Vagina (tissue), 2 donors: ENCODE measurements at regions of chr17 and their contacts with region 1.

Region 1: GRCh38 chr17:32259586-32259985 is 6.0 kb upstream of the RHBDL3 start:
- DNase-seq: no peak
- H3K4me3 ChIP-seq: no peak overlapping the region
- H3K27ac ChIP-seq: no peak overlapping the region
- H3K4me1 ChIP-seq: peaks cover 7% of the 10 kb centered on the region
- H3K27me3 ChIP-seq: no peaks in the 10 kb centered on the region
- CTCF ChIP-seq: no peak
- POLR2A ChIP-seq: no peak

Region 2: GRCh38 chr17:32323811-32324491 is 64.4 kb after region 1 on chr17:
- intact Hi-C with region 1: loop called (anchors 5 kb)
- DNase-seq: no peak
- H3K4me3 ChIP-seq: peak overlapping the region; percentile 13 to 37
- H3K27ac ChIP-seq: no peak overlapping the region
- H3K4me1 ChIP-seq: peaks cover 9% of the 10 kb centered on the region
- H3K27me3 ChIP-seq: no peaks in the 10 kb centered on the region
- CTCF ChIP-seq: no peak
- POLR2A ChIP-seq: no peak

Region 3: DNA sequence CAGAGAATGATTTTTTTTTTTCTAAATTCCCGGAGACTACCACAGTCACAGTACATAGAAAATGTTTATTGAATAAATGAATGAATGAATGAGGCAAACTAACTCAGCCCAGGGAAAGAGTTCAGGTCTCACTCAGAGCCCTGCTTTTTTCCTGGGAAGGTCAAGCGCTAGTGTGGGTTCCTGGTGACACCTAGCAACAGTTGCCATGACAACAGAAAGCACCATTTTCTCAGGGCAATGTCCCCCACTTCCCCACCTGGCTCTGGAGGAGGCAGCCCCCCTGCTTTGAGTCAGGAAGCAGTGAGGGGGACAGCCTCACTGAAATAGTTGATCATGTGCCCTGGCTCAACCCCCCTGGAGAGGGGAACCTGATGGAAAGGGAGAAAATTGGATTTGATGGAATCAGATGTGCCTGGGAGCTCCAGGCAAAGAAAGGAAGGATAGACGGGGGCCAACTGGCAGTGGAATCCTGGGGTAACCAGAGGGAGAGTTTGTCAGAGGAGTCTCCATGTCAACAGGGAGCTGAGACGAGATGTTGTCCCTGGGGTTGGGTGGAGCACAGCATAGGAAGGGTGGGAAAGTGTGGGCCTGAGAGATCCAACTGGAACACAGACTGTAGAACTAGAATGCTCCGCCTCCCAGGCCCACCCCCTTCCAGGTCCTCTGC is 1753.3 kb after region 1 on chr17:
- intact Hi-C with region 1: no loop called
- DNase-seq: no peak
- H3K4me3 ChIP-seq: no peak overlapping the region
- H3K27ac ChIP-seq: no peak overlapping the region
- H3K4me1 ChIP-seq: peaks cover 6% of the 10 kb centered on the region
- H3K27me3 ChIP-seq: no peaks in the 10 kb centered on the region
- CTCF ChIP-seq: no peak
- POLR2A ChIP-seq: no peak